Sigmoid colon (tissue), 7 donors: ENCODE measurements at regions of chr11 and their contacts with region 1.

Region 1: GRCh38 chr11:75388386-75389275 is 10.7 kb upstream of the RPS3 start:
- DNase-seq: peak; percentile 75
- H3K4me3 ChIP-seq: no peak overlapping the region
- H3K27ac ChIP-seq: peak overlapping the region in 1 of 4 donors; percentile 16
- H3K4me1 ChIP-seq: peaks cover 0 to 9% (median 4%) of the 10 kb centered on the region in 4 donors
- H3K27me3 ChIP-seq: no peaks in the 10 kb centered on the region
- CTCF ChIP-seq: peak; percentile 17 to 77 (median 72)
- EP300 ChIP-seq: no peak
- POLR2A ChIP-seq: no peak

Region 2: GRCh38 chr11:75280227-75280701 is 108.4 kb before region 1 on chr11:
- intact Hi-C with region 1: loop called (anchors 1 kb)
- DNase-seq: peak; percentile 89
- H3K4me3 ChIP-seq: no peak overlapping the region
- H3K27ac ChIP-seq: peak overlapping the region; percentile 38 to 65 (median 54)
- H3K4me1 ChIP-seq: peaks cover 0 to 12% (median 7%) of the 10 kb centered on the region in 4 donors
- H3K27me3 ChIP-seq: no peaks in the 10 kb centered on the region
- CTCF ChIP-seq: peak; percentile 95 to 98 (median 96)
- EP300 ChIP-seq: no peak
- POLR2A ChIP-seq: no peak

Region 3: GRCh38 chr11:75328426-75329277 is 60.0 kb before region 1 on chr11:
- intact Hi-C with region 1: loop called (anchors 1 kb)
- DNase-seq: peak; percentile 88
- H3K4me3 ChIP-seq: no peak overlapping the region
- H3K27ac ChIP-seq: peak overlapping the region; percentile 73 to 98 (median 86)
- H3K4me1 ChIP-seq: peaks cover 0 to 78% (median 70%) of the 10 kb centered on the region in 4 donors
- H3K27me3 ChIP-seq: no peaks in the 10 kb centered on the region
- CTCF ChIP-seq: peak; percentile 63 to 82 (median 74)
- EP300 ChIP-seq: no peak
- POLR2A ChIP-seq: no peak

Region 4: GRCh38 chr11:75445315-75445953 is 56.8 kb after region 1 on chr11:
- intact Hi-C with region 1: loop called (anchors 2 kb)
- DNase-seq: peak; percentile 81
- H3K4me3 ChIP-seq: no peak overlapping the region
- H3K27ac ChIP-seq: no peak overlapping the region
- H3K4me1 ChIP-seq: no peaks in the 10 kb centered on the region
- H3K27me3 ChIP-seq: no peaks in the 10 kb centered on the region
- CTCF ChIP-seq: peak; percentile 93 to 99 (median 94)
- EP300 ChIP-seq: no peak
- POLR2A ChIP-seq: no peak

Region 5: GRCh38 chr11:75532200-75533048 is 143.8 kb after region 1 on chr11:
- intact Hi-C with region 1: loop called (anchors 2 kb)
- DNase-seq: peak; percentile 80
- H3K4me3 ChIP-seq: no peak overlapping the region
- H3K27ac ChIP-seq: no peak overlapping the region
- H3K4me1 ChIP-seq: no peaks in the 10 kb centered on the region
- H3K27me3 ChIP-seq: no peaks in the 10 kb centered on the region
- CTCF ChIP-seq: peak; percentile 67 to 95 (median 93)
- EP300 ChIP-seq: no peak
- POLR2A ChIP-seq: no peak